ENCODE measurements at regions of chr6 and their contacts with region 1.

Region 1: GRCh38 chr6:42378125-42378524 is 73.6 kb downstream of the TRERF1 start:
- DNase-seq: no peak
- H3K4me3 ChIP-seq: no peak overlapping the region
- H3K27ac ChIP-seq: no peak overlapping the region
- H3K4me1 ChIP-seq: no peaks in the 10 kb centered on the region
- H3K27me3 ChIP-seq: no peaks in the 10 kb centered on the region
- CTCF ChIP-seq: no peak
- POLR2A ChIP-seq: no peak

Region 2: DNA sequence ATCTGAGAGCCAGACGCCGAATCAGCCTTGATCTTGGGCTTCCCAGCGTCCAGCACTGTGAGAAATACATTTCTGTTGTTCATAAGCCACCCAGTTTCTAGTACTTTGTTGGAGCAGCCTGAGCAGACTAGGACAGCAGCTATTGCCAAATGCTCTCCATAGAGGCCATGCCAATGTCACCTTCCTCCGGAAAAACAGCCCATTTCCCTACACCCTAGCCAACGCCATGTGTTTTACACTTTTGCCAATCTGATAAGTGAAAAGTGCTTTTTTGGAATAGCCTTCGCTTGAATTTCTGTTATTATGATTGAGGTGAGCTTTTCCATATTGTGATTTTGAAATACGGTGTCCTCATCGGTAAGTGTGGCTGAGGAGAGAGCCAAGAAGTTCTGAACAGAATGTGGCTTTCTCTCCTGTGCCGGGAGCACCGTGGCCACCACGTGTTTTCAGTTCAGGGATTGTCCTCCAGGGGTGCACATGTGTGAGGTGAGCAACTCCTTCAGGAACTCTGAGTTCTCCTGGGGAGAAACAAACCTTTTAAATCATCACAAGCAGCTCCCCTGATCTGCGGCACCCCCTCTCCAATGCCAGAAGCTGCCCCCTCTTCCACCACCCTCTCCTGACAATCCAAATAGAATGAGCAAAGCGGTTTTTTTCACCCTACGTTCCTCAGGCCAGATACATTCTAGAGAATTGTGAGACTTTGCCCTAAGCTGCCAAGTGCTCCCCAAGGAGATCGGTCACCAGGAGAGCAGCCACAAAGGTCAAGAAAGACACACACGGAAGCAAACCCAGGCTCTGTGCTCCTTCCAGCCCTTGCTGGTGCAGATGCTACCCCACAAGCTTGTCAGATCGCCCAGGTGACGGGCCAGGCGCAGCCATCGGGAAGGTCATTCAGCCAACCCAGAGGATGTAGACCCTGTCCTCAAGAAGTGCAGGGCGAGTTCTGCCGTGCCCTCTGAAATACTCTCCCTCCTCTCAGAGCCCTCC is 291.8 kb before region 1 on chr6:
- intact Hi-C with region 1: loop called (anchors 5 kb)
- DNase-seq: peak in 1 of 2 donors; percentile 75
- H3K4me3 ChIP-seq: no peak overlapping the region
- H3K27ac ChIP-seq: peak overlapping the region; percentile 60 to 69
- H3K4me1 ChIP-seq: no peaks in the 10 kb centered on the region
- H3K27me3 ChIP-seq: no peaks in the 10 kb centered on the region
- CTCF ChIP-seq: peak; percentile 46 to 69 (median 61)
- POLR2A ChIP-seq: no peak